ENCODE measurements at regions of chr5 and their contacts with region 1.

Region 1: GRCh38 chr5:123671042-123671441 is 159.1 kb downstream of the CSNK1G3 start:
- DNase-seq: peak; percentile 50
- ATAC-seq: peak; percentile 63; the same call in 1 of the 2 replicates
- H3K4me3 ChIP-seq: no peak overlapping the region
- H3K27ac ChIP-seq: peak overlapping the region; percentile 90
- H3K4me1 ChIP-seq: peaks cover 26% of the 10 kb centered on the region
- H3K27me3 ChIP-seq: no peaks in the 10 kb centered on the region
- CTCF ChIP-seq: peak; percentile 79; the same call in 1 of the 2 replicates

Region 2: GRCh38 chr5:123813937-123814624 is 143.0 kb after region 1 on chr5:
- CTCF ChIA-PET with region 1: no interaction called
- POLR2A ChIA-PET with region 1: no interaction called
- in situ Hi-C with region 1: no loop called
- intact Hi-C with region 1: loop called (anchors 5 kb)
- DNase-seq: peak; percentile 77
- ATAC-seq: peak; percentile 95
- H3K4me3 ChIP-seq: peak overlapping the region; percentile 16 to 46
- H3K27ac ChIP-seq: peak overlapping the region; percentile 99
- H3K4me1 ChIP-seq: peaks cover 56% of the 10 kb centered on the region
- H3K27me3 ChIP-seq: no peaks in the 10 kb centered on the region
- CTCF ChIP-seq: no peak

Region 3: DNA sequence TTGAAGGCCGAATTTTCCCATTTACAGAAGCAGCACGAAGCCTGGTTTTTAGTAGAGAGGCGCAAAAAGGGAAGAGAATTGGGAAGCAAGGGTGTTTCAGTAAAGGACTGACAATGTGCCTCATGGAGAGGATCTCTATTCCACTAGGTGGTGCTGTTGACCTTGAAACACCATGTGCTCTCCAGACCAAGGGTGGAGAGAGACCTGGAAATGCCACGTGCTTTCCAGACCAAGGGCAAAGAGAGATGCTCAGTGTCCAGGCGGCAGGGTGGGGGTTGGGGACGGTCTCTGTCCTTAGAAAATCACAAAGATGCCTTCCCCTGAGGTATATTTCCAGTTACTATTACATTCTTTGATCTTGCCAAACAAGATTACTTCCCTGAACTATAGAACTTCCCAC is 266.2 kb after region 1 on chr5:
- CTCF ChIA-PET with region 1: no interaction called
- POLR2A ChIA-PET with region 1: no interaction called
- in situ Hi-C with region 1: no loop called
- intact Hi-C with region 1: loop called (anchors 5 kb)
- DNase-seq: no peak
- ATAC-seq: peak; percentile 80
- H3K4me3 ChIP-seq: no peak overlapping the region
- H3K27ac ChIP-seq: peak overlapping the region; percentile 73
- H3K4me1 ChIP-seq: no peaks in the 10 kb centered on the region
- H3K27me3 ChIP-seq: no peaks in the 10 kb centered on the region
- CTCF ChIP-seq: peak; percentile 66

Region 4: GRCh38 chr5:124056991-124057723 is 386.1 kb after region 1 on chr5:
- CTCF ChIA-PET with region 1: interaction called, 14 read pairs
- POLR2A ChIA-PET with region 1: no interaction called
- in situ Hi-C with region 1: no loop called
- intact Hi-C with region 1: no loop called
- DNase-seq: no peak
- ATAC-seq: no peak
- H3K4me3 ChIP-seq: no peak overlapping the region
- H3K27ac ChIP-seq: no peak overlapping the region; the same call in 1 of the 2 replicates
- H3K4me1 ChIP-seq: no peaks in the 10 kb centered on the region
- H3K27me3 ChIP-seq: no peaks in the 10 kb centered on the region
- CTCF ChIP-seq: no peak

Region 5: DNA sequence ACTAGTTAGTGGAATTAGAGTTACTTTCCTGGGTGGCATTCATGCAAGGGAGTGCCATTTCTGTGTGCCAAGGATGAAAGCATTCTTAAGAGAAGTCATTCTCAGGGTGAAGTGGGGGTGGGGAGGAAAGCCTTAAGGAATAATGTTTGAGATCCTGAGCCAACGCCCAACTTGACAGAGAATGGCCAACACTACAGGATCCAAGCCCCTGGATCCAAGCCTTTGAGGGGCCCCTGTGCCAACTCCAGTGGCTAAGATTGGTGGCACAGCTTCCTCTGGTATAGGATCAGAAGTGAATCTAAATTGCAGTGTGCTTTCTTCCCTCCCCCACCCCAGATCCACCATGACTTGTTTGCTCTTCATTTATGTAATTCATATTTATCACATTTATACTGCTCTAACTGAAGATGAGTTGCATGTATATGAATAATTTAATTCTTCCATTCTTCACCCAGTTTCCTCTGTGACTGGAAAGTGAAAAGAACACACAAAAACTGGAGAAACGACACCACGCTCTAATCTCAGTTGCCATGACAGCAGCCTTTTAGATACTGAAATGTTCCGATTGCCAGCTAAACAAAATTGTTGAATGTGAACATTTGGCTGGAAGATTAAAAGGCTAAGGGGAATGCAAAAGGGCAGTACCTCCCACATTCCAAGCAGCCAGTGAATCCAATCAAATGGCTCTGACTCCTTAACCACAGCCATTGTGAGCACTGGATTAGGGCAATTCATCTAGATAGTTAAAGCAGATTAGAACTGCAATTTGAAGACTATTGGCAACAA is 1070.9 kb after region 1 on chr5:
- CTCF ChIA-PET with region 1: no interaction called
- POLR2A ChIA-PET with region 1: no interaction called
- in situ Hi-C with region 1: no loop called
- intact Hi-C with region 1: loop called (anchors 5 kb)
- DNase-seq: no peak
- ATAC-seq: peak; percentile 66
- H3K4me3 ChIP-seq: peak overlapping the region; percentile 79 to 82
- H3K27ac ChIP-seq: peak overlapping the region; percentile 100
- H3K4me1 ChIP-seq: peaks cover 51% of the 10 kb centered on the region
- H3K27me3 ChIP-seq: no peaks in the 10 kb centered on the region
- CTCF ChIP-seq: no peak

Measured in Panc1 (cell line).